ENCODE measurements at regions of chr3 and their contacts with region 1.

Region 1: DNA sequence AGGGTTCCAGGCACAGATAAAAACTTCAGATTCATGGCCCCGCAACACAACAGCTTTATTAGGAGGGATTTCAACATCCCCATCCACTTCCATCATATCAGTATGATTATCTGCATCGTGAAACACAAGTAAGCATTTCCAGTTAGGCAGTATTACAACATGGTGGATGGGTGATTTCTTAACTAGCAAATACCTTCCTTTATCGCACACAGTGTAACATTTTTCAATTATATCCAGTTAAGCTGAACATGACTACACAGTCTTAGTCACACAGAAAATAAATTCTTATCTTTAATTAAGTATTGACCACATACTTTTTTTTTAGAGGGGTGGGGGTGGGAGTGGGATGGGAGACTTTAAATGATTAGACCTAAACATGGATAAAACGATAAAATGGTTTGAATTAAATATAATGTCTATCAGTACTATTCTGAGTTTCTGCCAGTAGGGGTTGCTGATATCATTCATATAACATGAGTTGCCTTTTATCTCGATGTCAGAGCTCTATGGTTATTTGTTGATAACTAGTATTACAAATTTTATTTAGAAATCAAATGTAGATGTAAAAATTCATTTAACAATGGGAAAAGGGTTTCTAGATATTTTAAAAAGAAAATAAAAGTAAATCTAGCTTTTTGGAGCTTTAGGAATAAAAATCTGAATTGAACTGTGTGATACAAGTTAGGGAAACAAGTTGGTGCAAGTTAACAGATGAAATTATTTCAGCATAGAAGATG is 146.6 kb downstream of the TBL1XR1 start:
- DNase-seq: peak in 1 of 3 donors; percentile 41
- ATAC-seq: peak; percentile 71
- H3K4me3 ChIP-seq: no peak overlapping the region
- H3K4me1 ChIP-seq: no peaks in the 10 kb centered on the region
- CTCF ChIP-seq: no peak

Region 2: GRCh38 chr3:176896640-176897039 is 154.0 kb before region 1 on chr3:
- intact Hi-C with region 1: no loop called
- DNase-seq: no peak
- ATAC-seq: no peak
- H3K4me3 ChIP-seq: no peak overlapping the region
- H3K4me1 ChIP-seq: no peaks in the 10 kb centered on the region
- CTCF ChIP-seq: no peak

Region 3: GRCh38 chr3:177069514-177070329 is 19.1 kb after region 1 on chr3:
- intact Hi-C with region 1: no loop called
- DNase-seq: no peak
- ATAC-seq: no peak
- H3K4me3 ChIP-seq: no peak overlapping the region
- H3K4me1 ChIP-seq: peaks cover 13% of the 10 kb centered on the region
- CTCF ChIP-seq: no peak

Region 4: GRCh38 chr3:177206936-177207335 is 156.3 kb after region 1 on chr3:
- intact Hi-C with region 1: no loop called
- DNase-seq: no peak
- ATAC-seq: no peak
- H3K4me3 ChIP-seq: no peak overlapping the region
- H3K4me1 ChIP-seq: peaks cover 8% of the 10 kb centered on the region
- CTCF ChIP-seq: no peak

Region 5: GRCh38 chr3:177359593-177360357 is 309.1 kb after region 1 on chr3:
- intact Hi-C with region 1: loop called (anchors 5 to 10 kb)
- DNase-seq: peak; percentile 97 to 98 (median 98)
- ATAC-seq: peak; percentile 84
- H3K4me3 ChIP-seq: peak overlapping the region; percentile 6
- H3K4me1 ChIP-seq: peaks cover 54% of the 10 kb centered on the region
- CTCF ChIP-seq: no peak

Region 6: GRCh38 chr3:177777699-177778098 is 727.0 kb after region 1 on chr3:
- intact Hi-C with region 1: loop called in 1 of 2 experiments (anchors 10 kb)
- DNase-seq: peak; percentile 53 to 78 (median 61)
- ATAC-seq: peak; percentile 94
- H3K4me3 ChIP-seq: no peak overlapping the region
- H3K4me1 ChIP-seq: no peaks in the 10 kb centered on the region
- CTCF ChIP-seq: peak; percentile 57